AG04450 (cell line): ENCODE measurements at regions of chr6 and their contacts with region 1.

Region 1: DNA sequence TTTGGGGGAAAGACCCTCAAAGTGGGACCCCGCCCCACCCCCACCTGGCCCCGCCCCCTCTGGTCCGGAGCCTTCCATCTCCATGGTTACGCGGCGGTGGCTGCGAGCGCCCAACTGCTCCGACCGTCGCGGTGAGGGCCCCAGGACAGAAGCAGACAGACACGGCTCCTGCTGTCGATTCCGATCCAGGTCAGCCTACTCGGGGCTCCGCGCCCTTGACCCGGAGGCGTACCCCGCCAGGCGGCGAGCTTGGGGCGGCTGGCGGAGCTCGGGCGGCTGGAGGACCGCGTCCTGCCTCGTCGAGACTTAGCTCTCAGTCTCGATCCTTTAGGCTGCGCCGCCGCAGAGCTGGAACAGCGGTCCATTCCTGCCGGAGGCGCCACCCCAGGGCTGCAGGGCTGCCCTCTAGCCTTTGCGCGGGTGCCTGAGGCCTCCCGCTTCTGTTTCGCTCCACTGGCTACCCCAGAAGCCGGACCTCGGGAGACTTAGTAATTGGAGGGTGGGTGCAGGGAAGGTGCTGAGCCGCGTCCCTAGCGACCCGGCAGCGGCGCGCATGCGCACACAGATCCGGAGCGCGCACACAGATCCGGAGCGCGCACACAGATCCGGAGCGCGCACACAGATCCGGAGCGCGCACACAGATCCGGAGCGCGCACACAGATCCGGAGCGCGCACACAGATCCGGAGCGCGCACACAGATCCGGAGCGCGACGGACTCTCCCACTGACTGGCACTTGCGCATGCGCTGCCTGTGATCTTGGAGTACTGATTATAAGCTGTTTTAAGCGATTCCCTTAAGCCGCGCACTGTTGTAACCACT is at the start of gene CFAP206:
- DNase-seq: peak; percentile 65
- H3K4me3 ChIP-seq: peak within 1 kb of the TSS; percentile 82
- H3K27ac ChIP-seq: no peak within 1 kb of the TSS
- H3K27me3 ChIP-seq: no peaks in the 10 kb centered on the region
- CTCF ChIP-seq: peak; percentile 39
- polyA plus RNA-seq, gene CFAP206: 0.11 TPM in 1 of 2 replicates, not detected in the other

Region 2: DNA sequence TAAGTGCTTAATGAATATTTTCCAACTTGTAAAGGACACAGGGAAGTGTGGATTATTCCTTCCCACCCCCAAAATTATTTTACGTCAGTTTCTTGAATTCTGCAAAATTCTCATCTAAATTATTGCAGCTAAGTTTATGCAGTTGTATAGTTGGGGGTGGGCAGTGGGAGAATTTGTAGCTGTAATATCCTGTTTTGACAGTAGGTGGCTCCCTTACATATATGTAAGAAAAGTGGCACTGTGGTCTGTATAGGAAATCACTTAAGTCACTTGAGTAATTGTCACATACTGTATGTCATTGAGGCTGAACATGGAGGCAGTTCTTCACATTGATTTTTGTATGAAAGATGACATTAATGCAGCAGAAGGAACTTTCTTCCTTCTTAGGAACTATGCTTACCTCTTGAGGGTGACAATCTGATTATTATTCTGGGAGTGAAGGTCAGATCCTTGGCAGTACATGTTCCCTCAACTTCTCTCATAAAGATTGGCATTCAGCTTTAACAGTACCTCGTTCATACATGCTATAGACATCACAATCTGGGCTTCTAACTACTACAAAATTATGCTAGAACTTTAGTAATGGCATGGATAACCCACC is 15.0 kb before region 1 on chr6:
- CTCF ChIA-PET with region 1: interaction called, 47 read pairs
- POLR2A ChIA-PET with region 1: no interaction called
- DNase-seq: no peak
- H3K4me3 ChIP-seq: no peak overlapping the region
- H3K27ac ChIP-seq: no peak overlapping the region
- H3K27me3 ChIP-seq: no peaks in the 10 kb centered on the region
- CTCF ChIP-seq: peak; percentile 73

Region 3: GRCh38 chr6:87846434-87846833 is 438.3 kb after region 1 on chr6:
- CTCF ChIA-PET with region 1: interaction called, 10 read pairs
- POLR2A ChIA-PET with region 1: no interaction called
- DNase-seq: no peak
- H3K4me3 ChIP-seq: no peak overlapping the region
- H3K27ac ChIP-seq: no peak overlapping the region
- H3K27me3 ChIP-seq: peaks cover 4% of the 10 kb centered on the region
- CTCF ChIP-seq: no peak